Heart right ventricle (tissue), 16 donors: ENCODE measurements at regions of chr17 and their contacts with region 1.

Region 1: DNA sequence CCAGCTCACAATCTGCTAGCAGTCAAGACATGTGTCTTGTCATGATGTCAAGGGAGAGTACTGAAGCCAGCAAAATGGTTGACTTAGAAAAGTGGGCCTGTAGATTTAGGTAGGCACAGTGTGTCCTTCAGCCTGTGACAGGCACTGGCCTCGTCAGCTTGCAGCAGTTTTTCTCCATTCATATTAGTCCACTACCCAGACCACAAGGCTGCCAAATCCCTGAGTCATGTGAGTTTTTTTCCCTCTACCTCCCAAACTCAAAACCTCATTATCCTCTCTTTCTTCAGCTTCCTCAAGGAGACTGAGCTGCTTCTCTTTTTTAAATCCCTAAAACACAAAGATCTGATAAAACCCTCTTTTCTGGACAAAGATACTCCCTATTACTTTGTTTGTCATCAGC is 102.6 kb upstream of the HS3ST3A1 start:
- DNase-seq: no peak
- ATAC-seq: no peak
- H3K4me3 ChIP-seq: no peak overlapping the region
- H3K27ac ChIP-seq: no peak overlapping the region
- H3K4me1 ChIP-seq: no peaks in the 10 kb centered on the region
- H3K27me3 ChIP-seq: no peaks in the 10 kb centered on the region
- CTCF ChIP-seq: no peak

Region 2: GRCh38 chr17:13765701-13766100 is 61.4 kb after region 1 on chr17:
- intact Hi-C with region 1: loop called in 1 of 10 experiments (anchors 10 kb)
- DNase-seq: no peak
- ATAC-seq: peak in 7 of 8 donors; percentile 52 to 89 (median 72)
- H3K4me3 ChIP-seq: no peak overlapping the region
- H3K27ac ChIP-seq: peak overlapping the region in 7 of 10 donors; percentile 13 to 73 (median 51)
- H3K4me1 ChIP-seq: peaks cover 0 to 6% (median 0%) of the 10 kb centered on the region in 9 donors
- H3K27me3 ChIP-seq: no peaks in the 10 kb centered on the region
- CTCF ChIP-seq: no peak

Region 3: GRCh38 chr17:13939222-13939621 is 234.9 kb after region 1 on chr17:
- intact Hi-C with region 1: loop called in 1 of 10 experiments (anchors 5 kb)
- DNase-seq: no peak
- ATAC-seq: no peak
- H3K4me3 ChIP-seq: no peak overlapping the region
- H3K27ac ChIP-seq: no peak overlapping the region
- H3K4me1 ChIP-seq: no peaks in the 10 kb centered on the region
- H3K27me3 ChIP-seq: no peaks in the 10 kb centered on the region
- CTCF ChIP-seq: no peak